Heart left ventricle (tissue), 16 donors: ENCODE measurements at regions of chr2 and their contacts with region 1.

Region 1: GRCh38 chr2:159044804-159045286 is 76.4 kb downstream of the TANC1 start:
- DNase-seq: peak in 1 of 5 donors; percentile 57
- ATAC-seq: peak; percentile 32 to 52 (median 43)
- H3K4me3 ChIP-seq: no peak overlapping the region
- H3K27ac ChIP-seq: peak overlapping the region in 10 of 12 donors; percentile 9 to 73 (median 46)
- H3K4me1 ChIP-seq: peaks cover 0 to 69% (median 42%) of the 10 kb centered on the region in 12 donors
- H3K27me3 ChIP-seq: no peaks in the 10 kb centered on the region
- CTCF ChIP-seq: no peak
- POLR2A ChIP-seq: no peak

Region 2: DNA sequence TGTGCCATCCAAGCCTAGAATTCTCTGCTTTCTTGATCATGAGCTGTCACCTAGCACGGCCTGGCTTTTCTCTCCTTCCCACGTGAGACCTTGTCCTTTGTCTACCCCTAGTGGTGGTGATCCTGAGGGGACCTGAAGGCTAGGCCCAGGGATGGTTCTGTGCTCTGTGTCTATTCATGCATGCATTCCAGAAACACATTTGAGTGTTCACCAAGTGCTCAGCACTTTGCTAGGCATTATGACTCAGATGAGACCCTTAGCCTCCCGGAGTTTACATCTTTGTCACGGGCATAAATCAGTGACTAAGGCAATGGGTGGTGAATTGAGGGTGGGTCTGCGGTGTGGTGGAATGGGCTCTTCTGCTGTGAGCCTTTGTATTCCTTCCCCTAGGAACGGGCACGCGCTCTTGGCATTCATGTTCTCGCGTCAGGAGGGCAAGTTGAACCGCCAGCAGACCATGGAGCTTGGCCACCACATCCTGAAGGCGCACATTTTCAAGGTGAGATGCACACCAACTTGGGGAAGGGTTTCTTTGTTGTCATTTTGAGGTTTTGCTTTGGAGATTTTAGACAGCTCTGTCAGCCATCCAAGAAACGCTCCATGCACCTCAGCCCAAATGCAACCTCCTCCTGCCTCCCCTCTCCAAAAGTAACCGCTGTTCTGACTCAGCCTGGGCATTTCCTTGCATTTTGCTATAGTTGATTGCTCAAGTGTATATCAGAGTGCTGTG is 140.7 kb after region 1 on chr2:
- intact Hi-C with region 1: loop called in 1 of 10 experiments (anchors 10 kb)
- DNase-seq: no peak
- ATAC-seq: peak; percentile 18 to 66 (median 52)
- H3K4me3 ChIP-seq: no peak overlapping the region
- H3K27ac ChIP-seq: peak overlapping the region in 5 of 12 donors; percentile 22 to 52 (median 45)
- H3K4me1 ChIP-seq: peaks cover 3 to 50% (median 25%) of the 10 kb centered on the region in 12 donors
- H3K27me3 ChIP-seq: no peaks in the 10 kb centered on the region
- CTCF ChIP-seq: peak in 11 of 12 donors; percentile 21 to 58 (median 41)
- POLR2A ChIP-seq: no peak